PC-9 (cell line): ENCODE measurements at regions of chr5 and their contacts with region 1.

Region 1: DNA sequence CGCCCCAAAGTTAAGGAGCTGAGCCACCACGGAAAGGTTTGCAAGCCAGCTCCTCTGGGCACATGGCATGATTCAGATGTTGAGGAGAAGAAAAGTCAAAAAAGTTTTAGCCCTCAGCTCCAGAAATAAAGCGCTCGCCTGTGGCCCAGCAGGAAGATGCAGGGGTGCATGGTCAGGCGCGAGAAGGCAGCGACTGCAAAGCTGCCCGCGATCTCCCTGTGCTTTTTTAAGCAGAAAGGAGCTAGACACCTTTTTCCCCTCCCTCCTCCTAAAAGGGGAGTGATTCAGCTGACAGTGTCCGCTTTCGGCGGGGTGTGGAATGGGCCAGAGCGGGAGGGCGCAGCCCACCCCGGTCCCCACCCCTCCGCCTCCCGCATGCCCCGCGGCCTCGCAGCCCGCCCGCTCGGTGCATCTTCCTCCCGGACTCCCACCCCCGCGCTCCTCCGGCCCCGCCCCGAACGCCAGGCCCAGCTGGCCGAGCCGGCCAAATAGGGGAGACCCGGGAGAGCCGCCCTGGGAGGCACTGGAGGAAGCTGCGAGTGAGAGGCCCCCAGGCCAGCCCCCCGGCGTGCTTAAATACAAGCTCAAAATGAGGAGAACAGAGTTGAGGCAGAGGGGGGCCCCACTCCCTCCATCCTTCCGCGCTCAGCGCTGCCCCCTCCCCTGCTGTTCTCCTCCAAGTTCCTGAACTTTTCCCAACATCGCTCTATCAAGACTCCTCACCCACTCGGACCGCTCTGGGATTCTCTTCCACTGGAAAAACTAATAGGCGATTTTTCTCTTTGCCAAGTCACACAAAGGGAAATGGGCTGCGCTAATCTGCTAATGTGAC is at the start of gene ADAMTS12:
- DNase-seq: peak; percentile 68 to 87
- H3K4me3 ChIP-seq: peak within 1 kb of the TSS; percentile 67
- H3K27ac ChIP-seq: peak within 1 kb of the TSS; percentile 75
- H3K4me1 ChIP-seq: peaks cover 77% of the 10 kb centered on the region
- H3K27me3 ChIP-seq: no peaks in the 10 kb centered on the region
- CTCF ChIP-seq: no peak; the same call in 1 of the 2 replicates
- total RNA-seq, gene ADAMTS12: 71.1 and 103 TPM in 2 replicates

Region 2: GRCh38 chr5:33649796-33650482 is 242.1 kb before region 1 on chr5:
- CTCF ChIA-PET with region 1: no interaction called
- POLR2A ChIA-PET with region 1: interaction called, 6 read pairs
- intact Hi-C with region 1: loop called (anchors 2 kb)
- DNase-seq: peak; percentile 72 to 90
- H3K4me3 ChIP-seq: no peak overlapping the region
- H3K27ac ChIP-seq: peak overlapping the region; percentile 30
- H3K4me1 ChIP-seq: peaks cover 30% of the 10 kb centered on the region
- H3K27me3 ChIP-seq: no peaks in the 10 kb centered on the region
- CTCF ChIP-seq: no peak

Region 3: GRCh38 chr5:33736510-33736909 is 155.5 kb before region 1 on chr5:
- CTCF ChIA-PET with region 1: no interaction called
- POLR2A ChIA-PET with region 1: no interaction called
- intact Hi-C with region 1: loop called (anchors 5 kb)
- DNase-seq: no peak
- H3K4me3 ChIP-seq: no peak overlapping the region
- H3K27ac ChIP-seq: no peak overlapping the region
- H3K4me1 ChIP-seq: no peaks in the 10 kb centered on the region
- H3K27me3 ChIP-seq: no peaks in the 10 kb centered on the region
- CTCF ChIP-seq: no peak

Region 4: GRCh38 chr5:33781286-33781685 is 110.7 kb before region 1 on chr5:
- CTCF ChIA-PET with region 1: no interaction called
- POLR2A ChIA-PET with region 1: no interaction called
- intact Hi-C with region 1: no loop called
- DNase-seq: peak in 1 of 2 experiments; percentile 23
- H3K4me3 ChIP-seq: no peak overlapping the region
- H3K27ac ChIP-seq: no peak overlapping the region
- H3K4me1 ChIP-seq: no peaks in the 10 kb centered on the region
- H3K27me3 ChIP-seq: no peaks in the 10 kb centered on the region
- CTCF ChIP-seq: no peak

Region 5: GRCh38 chr5:33824516-33825195 is 67.3 kb before region 1 on chr5:
- CTCF ChIA-PET with region 1: interaction called, 6 read pairs
- POLR2A ChIA-PET with region 1: interaction called, 13 read pairs
- intact Hi-C with region 1: loop called (anchors 5 kb)
- DNase-seq: no peak
- H3K4me3 ChIP-seq: no peak overlapping the region
- H3K27ac ChIP-seq: no peak overlapping the region
- H3K4me1 ChIP-seq: peaks cover 24% of the 10 kb centered on the region
- H3K27me3 ChIP-seq: no peaks in the 10 kb centered on the region
- CTCF ChIP-seq: no peak

Region 6: GRCh38 chr5:33850100-33850594 is 41.9 kb before region 1 on chr5:
- CTCF ChIA-PET with region 1: interaction called, 3 read pairs
- POLR2A ChIA-PET with region 1: interaction called, 3 read pairs
- intact Hi-C with region 1: loop called (anchors 1 kb)
- DNase-seq: peak; percentile 93 to 97
- H3K4me3 ChIP-seq: peak overlapping the region; percentile 31; the same call in 1 of the 2 replicates
- H3K27ac ChIP-seq: peak overlapping the region; percentile 88
- H3K4me1 ChIP-seq: peaks cover 55% of the 10 kb centered on the region
- H3K27me3 ChIP-seq: no peaks in the 10 kb centered on the region
- CTCF ChIP-seq: no peak

Region 7: DNA sequence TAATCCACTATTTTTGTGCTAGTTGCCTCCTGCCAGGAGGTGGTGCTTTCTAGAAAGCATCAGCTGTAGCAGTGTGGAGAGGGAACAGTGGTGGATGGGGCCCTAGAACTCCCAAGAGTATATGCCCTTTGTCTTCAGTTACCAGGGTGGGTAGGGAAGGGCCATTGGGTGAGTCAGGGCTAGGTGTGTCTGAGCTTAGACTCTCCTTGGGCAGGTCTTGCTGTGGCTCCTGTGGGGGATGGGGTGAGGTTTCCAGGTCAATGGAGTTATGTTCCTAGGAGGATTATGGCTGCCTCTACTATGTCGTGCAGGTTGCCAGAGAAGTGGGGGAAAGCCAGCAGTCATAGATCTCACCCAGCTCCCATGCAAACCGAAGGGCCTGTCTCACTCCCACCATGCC is 11.1 kb after region 1 on chr5:
- CTCF ChIA-PET with region 1: interaction called, 6 read pairs
- POLR2A ChIA-PET with region 1: interaction called, 4 read pairs
- intact Hi-C with region 1: loop called (anchors 1 kb)
- DNase-seq: peak; percentile 92 to 94
- H3K4me3 ChIP-seq: peak overlapping the region; percentile 22; the same call in 1 of the 2 replicates
- H3K27ac ChIP-seq: peak overlapping the region; percentile 72
- H3K4me1 ChIP-seq: peaks cover 36% of the 10 kb centered on the region
- H3K27me3 ChIP-seq: no peaks in the 10 kb centered on the region
- CTCF ChIP-seq: no peak; the same call in 1 of the 2 replicates